ENCODE measurements at regions of chr16 and their contacts with region 1.

Region 1: GRCh38 chr16:8572919-8573724 is 17.2 kb downstream of the TMEM114 start:
- DNase-seq: peak in 1 of 2 experiments; percentile 69
- H3K4me3 ChIP-seq: no peak overlapping the region
- H3K27ac ChIP-seq: no peak overlapping the region
- H3K4me1 ChIP-seq: peaks cover 2 to 28% (median 6%) of the 10 kb centered on the region in 4 experiments; a peak in 6 of 7 replicates
- H3K27me3 ChIP-seq: no peaks in the 10 kb centered on the region; a peak in 2 of 7 replicates
- CTCF ChIP-seq: peak; percentile 20 to 89 (median 69)
- EP300 ChIP-seq: no peak
- POLR2A ChIP-seq: no peak; a peak in 1 of 3 replicates
- RAD21 ChIP-seq: peak; percentile 81 to 85

Region 2: GRCh38 chr16:8505327-8505991 is 67.7 kb before region 1 on chr16:
- CTCF ChIA-PET with region 1: no interaction called
- POLR2A ChIA-PET with region 1: no interaction called
- DNase-seq: no peak
- H3K4me3 ChIP-seq: no peak overlapping the region
- H3K27ac ChIP-seq: no peak overlapping the region
- H3K4me1 ChIP-seq: 0 out of 7 replicates have a peak, but pooled peaks cover 0 to 4% (median 0%) of the 10 kb centered on the region in 4 experiments
- H3K27me3 ChIP-seq: peaks cover 0 to 31% (median 13%) of the 10 kb centered on the region in 4 experiments; a peak in 6 of 7 replicates
- CTCF ChIP-seq: no peak
- EP300 ChIP-seq: no peak
- POLR2A ChIP-seq: no peak
- RAD21 ChIP-seq: no peak

Region 3: DNA sequence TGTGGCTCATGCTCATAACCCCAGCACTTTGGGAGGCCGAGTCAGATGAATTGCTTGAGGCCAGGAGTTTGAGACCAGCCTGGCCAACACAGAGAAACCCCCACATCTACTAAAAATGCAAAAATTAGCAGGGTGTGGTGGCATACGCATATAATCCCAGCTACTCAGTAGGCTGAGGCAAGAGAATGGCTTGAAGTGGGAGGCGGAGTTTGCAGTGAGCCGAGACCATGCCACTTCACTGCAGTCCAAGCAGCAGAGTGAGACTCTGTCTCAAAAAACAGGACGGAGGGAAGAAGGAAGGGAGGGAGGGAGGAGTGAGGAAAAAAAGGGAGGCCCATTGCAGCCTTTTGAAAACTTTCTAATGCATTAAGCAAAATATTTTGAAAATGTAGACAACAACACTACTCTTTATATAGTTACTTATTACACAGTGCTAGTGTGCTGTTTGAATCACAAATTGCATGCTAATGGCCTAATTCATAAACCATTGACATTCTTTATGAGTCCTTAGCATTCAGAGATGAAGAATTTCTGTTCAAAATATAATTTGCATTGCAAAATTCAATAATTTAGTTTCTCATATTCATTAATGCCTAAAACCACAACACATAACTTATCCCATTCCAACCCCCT is 42.3 kb before region 1 on chr16:
- CTCF ChIA-PET with region 1: no interaction called
- POLR2A ChIA-PET with region 1: no interaction called
- DNase-seq: no peak
- H3K4me3 ChIP-seq: no peak overlapping the region
- H3K27ac ChIP-seq: no peak overlapping the region
- H3K4me1 ChIP-seq: peaks cover 0 to 3% (median 0%) of the 10 kb centered on the region in 4 experiments; a peak in 1 of 7 replicates
- H3K27me3 ChIP-seq: no peaks in the 10 kb centered on the region; a peak in 1 of 7 replicates
- CTCF ChIP-seq: no peak
- EP300 ChIP-seq: no peak
- POLR2A ChIP-seq: no peak
- RAD21 ChIP-seq: no peak

Region 4: GRCh38 chr16:8589057-8589899 is 16.2 kb after region 1 on chr16:
- CTCF ChIA-PET with region 1: interaction called, 162 read pairs
- POLR2A ChIA-PET with region 1: interaction called, 12 read pairs
- DNase-seq: peak in 1 of 2 experiments; percentile 78
- H3K4me3 ChIP-seq: peak overlapping the region; percentile 52 to 69 (median 60)
- H3K27ac ChIP-seq: no peak overlapping the region
- H3K4me1 ChIP-seq: peaks cover 0 to 12% (median 5%) of the 10 kb centered on the region in 4 experiments; a peak in 3 of 7 replicates
- H3K27me3 ChIP-seq: peaks cover 10 to 33% (median 21%) of the 10 kb centered on the region in 4 experiments
- CTCF ChIP-seq: peak in 2 of 3 experiments; percentile 8 to 12; a peak in 2 of 4 replicates
- EP300 ChIP-seq: no peak
- POLR2A ChIP-seq: no peak
- RAD21 ChIP-seq: no peak

Region 5: DNA sequence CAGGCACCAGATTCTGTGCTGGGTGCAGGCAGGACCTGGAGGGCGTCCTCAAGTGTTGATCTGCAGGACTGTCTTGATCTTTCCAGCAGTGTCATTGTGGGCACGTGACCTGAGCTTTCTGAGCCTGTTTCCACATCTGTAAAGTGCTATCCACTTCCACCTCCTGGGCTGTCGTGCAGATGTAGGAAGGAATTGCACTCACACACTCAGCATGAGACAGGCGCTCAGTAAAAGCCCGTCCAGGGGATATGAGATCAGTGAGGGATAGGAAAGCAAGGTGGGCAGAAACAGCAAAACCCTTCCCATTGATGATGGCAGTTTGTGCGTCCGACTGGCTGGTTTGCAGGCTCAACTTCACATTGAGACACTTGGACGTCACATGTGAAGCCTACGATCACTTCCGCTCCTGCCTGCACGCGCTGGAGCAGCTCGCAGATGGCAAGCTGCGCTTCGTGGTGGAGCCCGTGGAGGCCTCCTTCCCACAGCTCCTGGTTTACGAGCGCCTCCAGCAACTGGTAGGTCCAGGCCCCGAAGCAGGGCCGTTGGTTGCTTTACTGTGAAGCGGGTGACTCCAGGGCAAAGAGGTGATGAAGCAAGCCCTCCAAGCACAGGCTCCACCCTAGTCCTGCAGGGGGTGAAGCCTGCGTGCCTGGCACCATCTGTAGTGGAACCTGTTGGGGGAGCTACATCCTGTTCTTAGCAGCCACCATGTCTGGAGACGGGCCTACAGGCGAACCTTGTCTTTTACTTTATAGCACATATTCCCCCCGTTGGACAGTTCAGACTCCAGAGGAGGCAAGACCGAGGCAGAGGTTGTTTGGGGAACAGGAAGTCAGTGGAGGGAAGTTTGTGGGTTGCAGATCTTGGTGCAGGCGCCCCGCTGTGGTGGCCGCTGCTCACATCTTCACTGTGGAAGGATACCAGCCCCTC is 71.4 kb after region 1 on chr16:
- CTCF ChIA-PET with region 1: interaction called, 416 read pairs
- POLR2A ChIA-PET with region 1: interaction called, 10 read pairs
- DNase-seq: no peak
- H3K4me3 ChIP-seq: no peak overlapping the region
- H3K27ac ChIP-seq: no peak overlapping the region
- H3K4me1 ChIP-seq: no peaks in the 10 kb centered on the region
- H3K27me3 ChIP-seq: no peaks in the 10 kb centered on the region
- CTCF ChIP-seq: no peak
- EP300 ChIP-seq: no peak
- POLR2A ChIP-seq: no peak
- RAD21 ChIP-seq: no peak

Region 6: DNA sequence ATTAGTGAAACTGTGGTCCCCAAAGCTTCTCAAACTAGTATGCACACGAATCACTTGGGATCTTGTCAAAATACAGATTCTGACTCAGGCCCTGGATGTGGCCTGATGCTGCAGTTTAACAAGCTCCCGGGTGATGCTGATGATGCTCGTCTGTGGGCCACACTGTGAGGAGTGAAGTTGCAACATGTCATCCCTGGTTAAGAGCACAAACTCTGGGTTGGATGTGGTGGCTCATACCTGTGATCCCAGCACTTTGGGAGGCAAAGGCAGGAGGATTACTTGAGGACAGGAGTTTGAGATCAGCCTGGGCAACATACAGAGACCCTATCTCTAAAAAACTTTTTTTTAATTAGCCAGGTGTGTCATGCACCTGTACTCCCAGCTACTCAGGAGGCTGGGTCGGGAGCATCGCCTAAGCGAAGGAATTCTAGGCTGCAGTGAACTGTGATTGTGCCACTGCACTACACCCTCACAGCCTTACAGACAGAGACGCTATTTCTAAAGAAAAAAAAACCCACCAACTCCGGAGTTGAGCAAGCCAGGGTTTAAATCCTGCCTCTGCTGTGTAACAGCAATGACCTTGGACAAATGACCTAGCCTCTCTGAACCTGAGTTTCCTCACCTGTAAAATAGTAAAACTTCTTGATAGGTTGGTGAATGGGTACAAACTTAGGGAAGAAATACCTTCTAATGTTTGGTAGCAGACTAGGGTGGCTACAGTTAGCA is 76.9 kb after region 1 on chr16:
- CTCF ChIA-PET with region 1: interaction called, 90 read pairs
- POLR2A ChIA-PET with region 1: interaction called, 10 read pairs
- DNase-seq: no peak
- H3K4me3 ChIP-seq: no peak overlapping the region
- H3K27ac ChIP-seq: no peak overlapping the region
- H3K4me1 ChIP-seq: no peaks in the 10 kb centered on the region
- H3K27me3 ChIP-seq: no peaks in the 10 kb centered on the region
- CTCF ChIP-seq: no peak
- EP300 ChIP-seq: no peak
- POLR2A ChIP-seq: no peak
- RAD21 ChIP-seq: no peak